MCF 10A (cell line): ENCODE measurements at regions of chr7 and their contacts with region 1.

Region 1: GRCh38 chr7:7182156-7183060 is at the start of gene C1GALT1:
- DNase-seq: peak; percentile 98
- H3K4me3 Mint-ChIP-seq: peak within 1 kb of the TSS; percentile 98
- H3K27ac Mint-ChIP-seq: peak within 1 kb of the TSS; percentile 94
- H3K4me1 Mint-ChIP-seq: peaks cover 26% of the 10 kb centered on the region
- H3K27me3 Mint-ChIP-seq: no peaks in the 10 kb centered on the region
- CTCF ChIP-seq: peak; percentile 17
- total RNA-seq, gene C1GALT1: 30.9 and 39.6 TPM in 2 replicates

Region 2: GRCh38 chr7:6495597-6496262 is 686.7 kb before region 1 on chr7:
- CTCF ChIA-PET with region 1: no interaction called
- POLR2A ChIA-PET with region 1: no interaction called
- intact Hi-C with region 1: no loop called
- DNase-seq: no peak
- H3K4me3 Mint-ChIP-seq: no peak overlapping the region
- H3K27ac Mint-ChIP-seq: no peak overlapping the region
- H3K4me1 Mint-ChIP-seq: no peaks in the 10 kb centered on the region
- H3K27me3 Mint-ChIP-seq: no peaks in the 10 kb centered on the region
- CTCF ChIP-seq: no peak

Region 3: DNA sequence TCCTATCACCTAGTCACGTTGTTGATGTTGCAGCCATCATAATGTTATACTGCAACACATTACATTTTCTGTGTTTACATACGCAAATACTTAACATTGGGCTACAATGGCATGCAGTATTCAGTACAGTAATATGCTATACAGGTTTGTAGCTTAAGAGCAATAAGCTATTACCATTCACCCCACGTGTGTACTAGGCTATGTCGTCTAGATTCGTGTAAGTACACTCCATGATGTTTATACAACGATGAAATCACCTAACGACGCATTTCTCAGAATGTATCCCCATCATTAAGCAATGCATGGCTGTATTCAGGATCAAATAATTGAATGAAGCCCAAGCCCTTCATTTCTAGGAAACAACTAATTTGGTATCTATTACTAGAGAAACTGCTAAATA is 43.5 kb before region 1 on chr7:
- CTCF ChIA-PET with region 1: no interaction called
- POLR2A ChIA-PET with region 1: no interaction called
- intact Hi-C with region 1: no loop called
- DNase-seq: no peak
- H3K4me3 Mint-ChIP-seq: no peak overlapping the region
- H3K27ac Mint-ChIP-seq: no peak overlapping the region
- H3K4me1 Mint-ChIP-seq: no peaks in the 10 kb centered on the region
- H3K27me3 Mint-ChIP-seq: no peaks in the 10 kb centered on the region
- CTCF ChIP-seq: no peak

Region 4: DNA sequence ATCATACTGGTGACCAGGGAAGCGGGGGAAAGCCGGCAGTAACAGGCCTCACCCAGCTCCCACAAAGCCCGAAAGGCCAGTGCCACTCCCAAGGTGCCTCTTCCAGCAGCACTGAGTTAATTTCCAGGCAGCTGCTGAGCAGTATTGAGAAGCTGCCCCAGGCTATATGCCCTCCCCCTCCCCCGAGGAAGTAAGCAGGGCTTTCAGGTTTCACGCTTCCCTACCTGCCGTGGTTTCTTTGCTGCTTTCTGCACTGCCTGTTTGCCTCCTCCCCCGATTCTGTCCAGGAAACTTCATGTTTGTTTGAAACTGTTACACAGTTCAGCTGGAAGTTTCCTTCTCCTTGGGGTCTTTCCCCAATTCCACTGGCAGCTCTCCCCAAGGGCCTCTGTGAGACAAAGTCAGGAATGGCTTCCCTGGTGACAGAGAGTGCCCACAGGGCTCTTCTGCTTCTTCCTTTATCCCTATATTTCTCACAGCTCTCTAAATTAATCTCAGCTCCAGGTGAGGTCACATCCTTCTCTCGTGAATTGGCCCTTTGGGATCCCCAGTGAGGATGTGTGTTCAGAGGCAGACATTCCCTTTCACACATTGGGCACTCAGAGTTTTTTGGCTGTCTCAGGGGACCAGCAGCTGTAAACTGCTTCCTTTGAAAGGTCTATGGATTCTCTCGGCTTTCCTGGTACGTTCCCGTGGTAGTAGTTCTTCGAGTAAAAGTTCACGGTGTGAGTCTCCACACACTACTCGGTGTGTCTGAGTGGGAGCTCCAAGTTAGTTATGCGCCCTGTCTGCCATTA is 19.4 kb after region 1 on chr7:
- CTCF ChIA-PET with region 1: interaction called, 6 read pairs
- POLR2A ChIA-PET with region 1: interaction called, 39 read pairs
- intact Hi-C with region 1: no loop called
- DNase-seq: peak; percentile 69
- H3K4me3 Mint-ChIP-seq: peak overlapping the region; percentile 38
- H3K27ac Mint-ChIP-seq: peak overlapping the region; percentile 79
- H3K4me1 Mint-ChIP-seq: peaks cover 29% of the 10 kb centered on the region
- H3K27me3 Mint-ChIP-seq: no peaks in the 10 kb centered on the region
- CTCF ChIP-seq: no peak

Region 5: DNA sequence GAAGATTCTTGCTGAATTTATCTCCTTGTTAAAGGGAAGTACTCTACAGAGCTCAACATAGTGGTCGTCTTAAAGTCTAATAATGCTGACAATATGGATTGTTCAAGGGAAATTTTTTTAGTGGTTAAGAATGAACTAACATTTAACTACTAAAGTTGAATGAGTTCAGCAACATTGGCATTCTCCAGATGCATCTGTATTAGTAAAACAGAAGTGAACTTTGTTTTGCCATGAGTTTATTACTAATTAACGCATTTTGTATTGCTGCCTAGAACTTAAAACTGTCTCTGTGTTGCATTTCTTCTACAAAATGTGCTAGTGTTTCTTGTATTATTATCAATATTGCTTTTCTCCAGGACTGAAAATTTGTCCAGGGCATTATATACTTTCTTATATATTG is 67.4 kb after region 1 on chr7:
- CTCF ChIA-PET with region 1: no interaction called
- POLR2A ChIA-PET with region 1: interaction called, 10 read pairs
- intact Hi-C with region 1: loop called (anchors 5 kb)
- DNase-seq: no peak
- H3K4me3 Mint-ChIP-seq: no peak overlapping the region
- H3K27ac Mint-ChIP-seq: no peak overlapping the region
- H3K4me1 Mint-ChIP-seq: no peaks in the 10 kb centered on the region
- H3K27me3 Mint-ChIP-seq: no peaks in the 10 kb centered on the region
- CTCF ChIP-seq: no peak

Region 6: DNA sequence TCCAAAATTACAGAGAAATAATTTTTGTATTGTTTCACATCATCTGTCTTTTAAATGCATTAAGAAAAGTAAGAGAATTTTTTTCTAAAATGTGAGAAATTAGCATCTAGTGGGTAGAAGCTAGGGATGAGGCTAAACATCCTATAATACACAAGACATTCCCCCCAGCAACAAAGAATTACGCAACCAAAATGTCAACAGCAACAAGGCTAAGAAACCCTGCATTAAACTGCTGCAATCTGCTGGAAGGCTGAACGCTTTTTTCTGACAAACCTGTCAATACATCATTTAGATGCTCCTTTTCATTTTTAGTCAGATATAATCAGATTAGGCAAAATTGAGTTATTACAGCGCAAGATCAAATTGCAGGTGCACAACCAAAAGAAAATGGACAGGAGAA is 162.2 kb after region 1 on chr7:
- CTCF ChIA-PET with region 1: no interaction called
- POLR2A ChIA-PET with region 1: no interaction called
- intact Hi-C with region 1: no loop called
- DNase-seq: no peak
- H3K4me3 Mint-ChIP-seq: no peak overlapping the region
- H3K27ac Mint-ChIP-seq: no peak overlapping the region
- H3K4me1 Mint-ChIP-seq: no peaks in the 10 kb centered on the region
- H3K27me3 Mint-ChIP-seq: no peaks in the 10 kb centered on the region
- CTCF ChIP-seq: no peak

Region 7: DNA sequence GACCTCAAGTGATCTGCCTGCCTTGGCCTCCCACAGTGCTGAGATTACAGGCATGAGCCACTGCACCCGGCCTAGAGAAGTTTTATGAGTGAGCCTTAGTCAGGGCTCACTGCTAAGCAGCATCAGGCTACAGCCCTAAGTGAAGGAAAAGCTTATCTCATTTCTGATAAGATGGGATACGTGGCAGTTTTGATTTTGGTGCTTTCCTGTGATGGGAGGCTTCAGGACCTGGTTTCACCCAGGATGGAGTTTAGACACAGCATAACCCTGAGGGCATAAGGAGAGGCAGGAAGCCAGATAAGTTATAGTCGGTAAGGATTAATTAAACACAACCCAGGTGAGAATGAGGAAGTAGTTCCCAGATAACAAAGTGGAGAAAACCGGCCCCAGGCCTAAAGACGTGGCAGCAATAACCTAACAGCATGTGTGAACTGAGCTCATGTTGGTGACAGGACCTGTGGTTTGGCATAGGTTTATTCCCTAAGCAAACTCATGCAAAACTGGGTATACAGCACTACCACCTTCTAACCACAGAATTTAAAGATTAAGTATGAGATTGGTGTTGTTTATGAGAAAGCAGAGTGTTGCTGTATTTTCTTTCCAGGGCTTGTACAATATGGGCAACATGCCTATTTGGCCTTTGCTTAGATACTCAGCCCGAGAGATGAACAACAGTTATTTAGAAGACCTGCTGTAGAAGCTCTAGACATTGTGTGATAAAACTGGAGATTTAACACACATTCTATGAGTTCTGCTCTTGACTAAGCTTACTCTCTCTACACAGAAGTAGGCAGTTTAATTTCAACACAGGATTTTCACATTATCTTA is 233.8 kb after region 1 on chr7:
- CTCF ChIA-PET with region 1: interaction called, 10 read pairs
- POLR2A ChIA-PET with region 1: interaction called, 5 read pairs
- intact Hi-C with region 1: loop called (anchors 5 kb)
- DNase-seq: peak; percentile 30
- H3K4me3 Mint-ChIP-seq: no peak overlapping the region
- H3K27ac Mint-ChIP-seq: peak overlapping the region; percentile 22
- H3K4me1 Mint-ChIP-seq: peaks cover 6% of the 10 kb centered on the region
- H3K27me3 Mint-ChIP-seq: no peaks in the 10 kb centered on the region
- CTCF ChIP-seq: no peak

Region 8: DNA sequence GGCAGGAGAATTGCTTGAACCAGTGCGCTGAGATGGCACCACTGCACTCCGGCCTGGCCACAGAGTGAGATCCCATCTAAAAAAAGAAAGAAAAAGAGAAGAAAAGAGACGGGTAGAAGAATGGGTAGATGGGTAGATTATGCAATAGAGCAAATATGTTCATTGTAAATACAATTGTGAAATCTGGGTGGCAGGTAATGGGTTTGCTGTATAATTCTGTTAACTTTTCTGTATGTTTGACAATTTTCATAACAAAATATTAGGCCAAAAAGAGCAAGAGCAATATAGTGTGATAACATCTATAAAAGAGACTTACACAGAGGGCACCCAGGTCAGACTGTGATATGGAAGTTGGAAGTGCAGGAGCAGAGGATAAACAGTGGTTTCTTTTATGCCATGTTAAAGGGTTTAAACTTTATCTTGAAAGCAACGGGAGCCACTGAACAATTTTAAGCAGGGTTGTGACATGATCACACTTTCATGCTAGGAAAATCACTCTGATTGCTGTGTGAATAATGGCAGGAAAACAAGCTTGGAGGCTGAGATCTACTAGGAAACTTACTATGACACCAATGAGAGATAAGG is 359.9 kb after region 1 on chr7:
- CTCF ChIA-PET with region 1: no interaction called
- POLR2A ChIA-PET with region 1: interaction called, 8 read pairs
- intact Hi-C with region 1: loop called (anchors 2 kb)
- DNase-seq: no peak
- H3K4me3 Mint-ChIP-seq: no peak overlapping the region
- H3K27ac Mint-ChIP-seq: peak overlapping the region; percentile 62
- H3K4me1 Mint-ChIP-seq: peaks cover 18% of the 10 kb centered on the region
- H3K27me3 Mint-ChIP-seq: no peaks in the 10 kb centered on the region
- CTCF ChIP-seq: no peak

Region 9: DNA sequence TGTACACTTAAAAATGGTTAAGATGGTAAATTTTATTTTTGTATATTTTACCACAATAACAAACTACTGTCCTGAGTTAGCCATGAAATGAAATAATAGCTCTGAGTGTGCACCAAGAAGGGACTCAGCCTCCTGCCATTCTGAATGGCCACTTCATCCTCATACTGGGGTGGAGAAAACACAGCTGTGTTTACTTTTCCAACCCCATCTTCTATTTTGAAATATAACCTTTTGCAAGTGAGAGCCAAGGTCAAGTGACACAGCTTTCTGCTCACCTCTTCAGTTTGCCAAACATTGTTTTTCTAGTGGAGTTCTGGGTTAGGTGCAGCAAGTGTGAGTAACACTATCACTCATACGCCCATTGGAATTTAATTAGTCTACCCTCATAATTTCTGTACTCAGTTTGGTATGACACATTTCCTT is 678.8 kb after region 1 on chr7:
- CTCF ChIA-PET with region 1: no interaction called
- POLR2A ChIA-PET with region 1: no interaction called
- intact Hi-C with region 1: no loop called
- DNase-seq: peak; percentile 81
- H3K4me3 Mint-ChIP-seq: no peak overlapping the region
- H3K27ac Mint-ChIP-seq: peak overlapping the region; percentile 89
- H3K4me1 Mint-ChIP-seq: peaks cover 11% of the 10 kb centered on the region
- H3K27me3 Mint-ChIP-seq: no peaks in the 10 kb centered on the region
- CTCF ChIP-seq: no peak